Right lobe of liver (tissue), 6 donors: ENCODE measurements at regions of chr14 and their contacts with region 1.

Region 1: GRCh38 chr14:89033756-89034155 is 209.3 kb downstream of the TTC8 start:
- DNase-seq: no peak
- ATAC-seq: no peak
- H3K4me3 ChIP-seq: no peak overlapping the region
- H3K27ac ChIP-seq: no peak overlapping the region
- H3K4me1 ChIP-seq: no peaks in the 10 kb centered on the region
- H3K27me3 ChIP-seq: no peaks in the 10 kb centered on the region
- CTCF ChIP-seq: no peak
- POLR2A ChIP-seq: no peak

Region 2: DNA sequence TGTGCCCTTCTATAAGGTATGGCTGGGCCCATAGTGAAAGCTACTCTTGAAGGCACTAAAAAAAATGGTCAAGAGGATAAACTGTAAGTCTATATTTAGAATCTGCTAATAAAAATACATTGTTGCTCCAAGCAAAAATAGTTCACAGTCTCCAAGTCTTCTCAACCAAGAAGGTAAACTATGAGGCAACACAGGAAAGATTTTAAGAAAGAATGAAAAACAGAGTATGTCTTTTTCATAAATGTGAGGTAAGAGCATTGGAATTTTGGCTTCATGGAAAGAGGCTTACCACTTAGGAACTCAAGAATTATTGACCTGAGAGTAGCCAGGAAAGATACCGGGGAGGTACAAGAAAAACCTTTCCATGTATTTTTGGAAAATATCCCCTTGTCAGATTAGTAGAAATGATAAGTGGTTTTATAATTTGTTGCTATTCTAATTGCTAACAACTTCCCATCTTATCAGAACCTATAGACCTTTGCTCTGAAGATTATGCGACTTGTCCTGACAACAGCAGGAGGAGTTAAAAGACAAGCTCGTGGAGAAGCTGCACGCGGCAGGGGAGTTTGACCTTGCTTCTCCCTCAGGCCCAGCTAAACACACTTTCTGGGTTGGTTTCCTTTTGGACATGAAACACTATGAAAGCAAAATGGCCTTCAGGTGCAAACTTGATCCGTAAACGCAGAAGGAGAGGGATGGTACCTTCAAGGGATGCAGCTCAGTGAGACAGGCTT is 145.2 kb after region 1 on chr14:
- intact Hi-C with region 1: loop called in 1 of 2 experiments (anchors 10 kb)
- DNase-seq: no peak
- ATAC-seq: no peak
- H3K4me3 ChIP-seq: no peak overlapping the region
- H3K27ac ChIP-seq: no peak overlapping the region
- H3K4me1 ChIP-seq: peaks cover 0 to 18% (median 3%) of the 10 kb centered on the region in 4 donors
- H3K27me3 ChIP-seq: no peaks in the 10 kb centered on the region
- CTCF ChIP-seq: no peak
- POLR2A ChIP-seq: no peak

Region 3: GRCh38 chr14:89915114-89915878 is 881.5 kb after region 1 on chr14:
- intact Hi-C with region 1: loop called in 1 of 2 experiments (anchors 10 kb)
- DNase-seq: no peak
- ATAC-seq: peak; percentile 68 to 82 (median 80)
- H3K4me3 ChIP-seq: peak overlapping the region in 2 of 3 donors; percentile 30 to 33
- H3K27ac ChIP-seq: peak overlapping the region in 1 of 3 donors; percentile 22
- H3K4me1 ChIP-seq: peaks cover 0 to 16% (median 7%) of the 10 kb centered on the region in 4 donors
- H3K27me3 ChIP-seq: no peaks in the 10 kb centered on the region
- CTCF ChIP-seq: peak; percentile 94
- POLR2A ChIP-seq: no peak